Activated CD8-positive, alpha-beta T cell treated with anti-CD3 and anti-CD28 coated beads, Interleukin-2, amount 10 ng/mL, durations not matched to agents 7 days and 5 days (primary cell): ENCODE measurements at regions of chr11 and their contacts with region 1.

Region 1: GRCh38 chr11:8006349-8006977 is 19.3 kb downstream of the EIF3F start:
- DNase-seq: peak; percentile 49
- ATAC-seq: peak; percentile 66
- H3K4me3 Mint-ChIP-seq: no peak overlapping the region
- H3K27ac Mint-ChIP-seq: no peak overlapping the region
- H3K4me1 Mint-ChIP-seq: no peaks in the 10 kb centered on the region
- H3K27me3 Mint-ChIP-seq: no peaks in the 10 kb centered on the region

Region 2: DNA sequence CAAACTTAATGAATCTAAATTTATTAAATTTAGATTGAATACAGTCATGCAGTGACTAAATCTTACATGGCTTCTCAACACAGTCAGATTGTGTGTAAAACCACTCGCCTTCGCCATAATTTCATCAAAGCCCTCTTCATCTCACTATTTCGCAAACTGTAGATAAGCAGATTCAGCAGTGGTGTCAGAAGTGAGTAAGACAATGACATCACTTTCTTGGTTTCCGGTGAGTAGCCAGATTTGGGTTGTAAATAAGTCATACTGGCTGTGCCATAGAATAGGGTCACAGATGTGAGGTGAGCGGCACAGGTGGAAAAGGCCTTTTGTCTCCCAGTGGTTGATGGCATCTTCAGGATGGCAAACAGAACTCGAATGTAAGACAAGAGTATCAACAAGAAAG is 78.8 kb before region 1 on chr11:
- CTCF ChIA-PET with region 1: no interaction called
- POLR2A ChIA-PET with region 1: no interaction called
- DNase-seq: no peak
- ATAC-seq: no peak
- H3K4me3 Mint-ChIP-seq: no peak overlapping the region
- H3K27ac Mint-ChIP-seq: no peak overlapping the region
- H3K4me1 Mint-ChIP-seq: no peaks in the 10 kb centered on the region
- H3K27me3 Mint-ChIP-seq: peaks cover 7% of the 10 kb centered on the region

Region 3: DNA sequence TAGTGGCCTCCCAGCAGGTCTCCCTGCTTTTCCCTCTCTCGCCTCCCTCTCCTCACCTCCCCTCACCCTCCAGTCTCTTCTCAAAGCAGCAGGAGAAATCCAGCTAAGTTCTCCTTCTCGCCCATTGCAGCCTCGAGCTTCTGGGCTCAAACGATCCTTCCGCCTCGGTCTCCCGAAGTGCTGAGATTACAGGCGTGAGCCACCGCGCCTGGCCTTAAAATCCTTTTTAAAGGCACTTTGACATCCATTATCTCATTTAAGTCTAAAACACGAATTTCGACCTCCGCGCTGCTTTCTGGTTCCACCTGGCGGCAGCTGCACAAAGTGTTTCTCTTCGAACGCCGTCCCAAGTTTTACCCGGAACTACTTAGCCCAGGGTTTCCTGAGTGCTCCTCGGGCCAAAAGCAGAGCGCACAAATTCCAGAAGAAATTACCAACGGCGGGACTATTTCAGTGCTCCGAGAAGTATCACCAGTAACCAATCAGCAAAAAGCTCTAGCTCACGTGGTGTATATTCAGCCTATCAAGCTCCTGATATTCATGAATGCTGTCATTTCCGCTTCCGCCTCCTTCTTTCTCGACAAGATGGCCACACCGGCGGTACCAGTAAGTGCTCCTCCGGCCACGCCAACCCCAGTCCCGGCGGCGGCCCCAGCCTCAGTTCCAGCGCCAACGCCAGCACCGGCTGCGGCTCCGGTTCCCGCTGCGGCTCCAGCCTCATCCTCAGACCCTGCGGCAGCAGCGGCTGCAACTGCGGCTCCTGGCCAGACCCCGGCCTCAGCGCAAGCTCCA is 19.5 kb before region 1 on chr11 and contains the start of gene EIF3F:
- CTCF ChIA-PET with region 1: interaction called, 11 read pairs
- POLR2A ChIA-PET with region 1: interaction called, 3 read pairs
- DNase-seq: peak; percentile 96
- ATAC-seq: peak; percentile 99
- H3K4me3 Mint-ChIP-seq: peak within 1 kb of the TSS; percentile 94
- H3K27ac Mint-ChIP-seq: peak within 1 kb of the TSS; percentile 94
- H3K4me1 Mint-ChIP-seq: peaks cover 35% of the 10 kb centered on the region
- H3K27me3 Mint-ChIP-seq: no peaks in the 10 kb centered on the region
- total RNA-seq, gene EIF3F: 212 to 222 TPM

Region 4: DNA sequence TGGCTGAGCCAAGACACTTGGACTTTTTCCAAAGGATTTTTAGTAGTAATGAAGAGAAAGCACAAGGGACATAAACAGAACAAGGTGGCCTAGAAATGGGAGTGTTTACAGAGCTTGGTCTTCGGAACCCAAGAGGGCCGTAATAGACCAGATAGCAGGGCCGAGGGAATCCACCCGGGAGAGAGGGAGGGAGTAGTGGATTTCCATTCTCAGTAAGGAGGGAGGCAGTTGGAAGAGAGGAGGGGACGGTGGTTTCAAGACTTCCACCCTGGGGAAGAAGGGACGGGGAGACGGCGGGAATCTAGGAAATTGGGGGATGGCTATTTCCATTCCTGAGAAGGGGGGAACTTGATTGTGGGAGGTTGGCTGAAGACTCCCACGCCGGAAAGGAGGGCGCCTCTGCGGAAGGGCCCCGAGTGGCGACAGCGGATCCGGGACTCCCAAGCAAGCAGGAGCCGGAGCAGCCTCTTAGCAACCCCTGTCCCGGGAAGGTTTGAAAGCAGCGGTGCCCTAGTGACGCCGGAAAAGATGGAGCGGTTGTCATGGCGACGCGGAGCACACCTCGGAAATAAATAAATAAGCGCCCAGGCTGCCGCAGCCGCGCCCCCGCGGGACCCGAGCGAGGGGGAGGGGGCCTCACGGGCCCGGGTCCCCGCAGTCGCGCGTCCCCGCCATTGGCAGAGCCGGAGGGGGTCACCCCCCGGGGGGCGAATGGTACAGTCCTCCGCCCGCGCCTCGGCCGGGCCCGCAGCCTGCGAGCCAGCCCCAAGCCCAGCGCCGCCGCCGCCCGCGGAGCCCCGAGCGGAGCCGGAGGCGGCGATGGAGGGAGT is 12.2 kb after region 1 on chr11:
- CTCF ChIA-PET with region 1: interaction called, 22 read pairs
- POLR2A ChIA-PET with region 1: no interaction called
- DNase-seq: peak; percentile 75
- ATAC-seq: peak; percentile 85
- H3K4me3 Mint-ChIP-seq: peak overlapping the region; percentile 42
- H3K27ac Mint-ChIP-seq: peak overlapping the region; percentile 5
- H3K4me1 Mint-ChIP-seq: peaks cover 11% of the 10 kb centered on the region
- H3K27me3 Mint-ChIP-seq: peaks cover 53% of the 10 kb centered on the region

Region 5: GRCh38 chr11:8056810-8057463 is 50.5 kb after region 1 on chr11:
- CTCF ChIA-PET with region 1: interaction called, 10 read pairs
- POLR2A ChIA-PET with region 1: interaction called, 3 read pairs
- DNase-seq: no peak
- ATAC-seq: no peak
- H3K4me3 Mint-ChIP-seq: no peak overlapping the region
- H3K27ac Mint-ChIP-seq: no peak overlapping the region
- H3K4me1 Mint-ChIP-seq: no peaks in the 10 kb centered on the region
- H3K27me3 Mint-ChIP-seq: no peaks in the 10 kb centered on the region